Activated naive CD8-positive, alpha-beta T cell treated with anti-CD3 and anti-CD28 coated beads, Interleukin-2, amount 10 ng/mL, durations not matched to agents 7 days and 5 days (primary cell): ENCODE measurements at regions of chr16 and their contacts with region 1.

Region 1: DNA sequence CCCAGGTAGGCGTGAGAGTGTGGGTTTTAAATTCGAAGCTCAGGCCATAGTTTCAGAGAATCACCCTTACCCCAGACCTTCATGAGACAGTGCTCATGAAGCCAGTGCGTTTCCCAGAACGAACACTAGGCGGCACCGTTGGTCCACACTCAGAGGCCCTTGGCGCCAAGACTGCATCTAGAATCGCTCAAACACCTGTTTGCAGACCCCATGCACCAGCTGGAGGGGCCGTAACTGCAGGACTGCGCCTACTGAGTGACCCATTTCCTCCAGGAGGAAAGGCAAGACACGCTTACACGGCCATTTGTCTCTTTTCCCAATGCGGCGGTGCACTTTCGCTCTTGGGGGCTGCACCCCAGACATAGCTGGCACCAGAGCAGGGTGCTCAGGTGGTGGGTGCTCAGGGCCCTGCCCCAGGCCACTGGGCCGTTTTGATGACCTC is 34.0 kb downstream of the ADGRG5 start:
- DNase-seq: peak; percentile 89
- ATAC-seq: peak; percentile 55
- H3K4me3 Mint-ChIP-seq: no peak overlapping the region
- H3K27ac Mint-ChIP-seq: peak overlapping the region; percentile 96
- H3K4me1 Mint-ChIP-seq: peaks cover 48% of the 10 kb centered on the region
- H3K27me3 Mint-ChIP-seq: no peaks in the 10 kb centered on the region

Region 2: DNA sequence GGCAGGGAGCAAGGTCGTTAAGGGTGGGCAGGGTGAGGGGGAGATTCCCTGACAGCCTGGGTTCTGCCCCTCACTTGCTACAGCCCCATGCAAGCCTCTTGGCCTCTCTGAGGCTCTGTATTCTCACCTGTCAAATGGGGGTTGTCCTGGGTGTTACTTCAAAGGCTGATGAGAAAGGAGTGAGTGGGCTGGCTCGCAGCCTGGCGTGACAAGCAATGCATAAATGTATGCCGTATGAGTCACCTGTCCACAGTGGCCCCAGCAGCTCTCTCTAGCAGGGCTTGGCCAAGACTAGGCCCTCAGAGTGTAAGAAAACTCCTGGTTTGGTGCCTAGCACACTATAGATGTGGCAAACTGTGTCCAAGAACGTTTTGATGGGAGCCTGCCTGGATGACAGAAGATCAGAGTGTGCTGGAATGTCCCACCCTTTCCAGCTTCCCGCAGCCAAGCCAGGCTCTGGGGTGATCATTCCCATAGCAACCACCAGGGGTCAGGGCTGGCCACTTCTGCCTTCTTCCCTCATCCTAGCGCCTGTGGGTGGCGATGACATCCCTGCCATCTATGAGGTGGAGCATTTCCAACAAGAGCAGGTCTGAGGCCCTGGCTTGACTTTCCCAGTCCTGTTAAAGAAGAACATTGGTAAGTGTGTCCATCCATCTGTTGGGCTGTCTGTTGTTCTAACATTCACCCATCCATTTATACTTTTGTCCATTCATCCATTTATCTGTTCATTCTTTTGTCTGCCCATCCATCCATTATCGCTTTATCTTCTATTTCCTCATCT is 14.8 kb after region 1 on chr16:
- POLR2A ChIA-PET with region 1: interaction called, 52 read pairs
- DNase-seq: peak; percentile 78
- ATAC-seq: peak; percentile 73
- H3K4me3 Mint-ChIP-seq: peak overlapping the region; percentile 77
- H3K27ac Mint-ChIP-seq: peak overlapping the region; percentile 93
- H3K4me1 Mint-ChIP-seq: peaks cover 53% of the 10 kb centered on the region
- H3K27me3 Mint-ChIP-seq: no peaks in the 10 kb centered on the region

Region 3: GRCh38 chr16:57609541-57610401 is 33.3 kb after region 1 on chr16:
- POLR2A ChIA-PET with region 1: interaction called, 17 read pairs
- DNase-seq: peak; percentile 66
- ATAC-seq: peak; percentile 93
- H3K4me3 Mint-ChIP-seq: peak overlapping the region; percentile 67
- H3K27ac Mint-ChIP-seq: peak overlapping the region; percentile 93
- H3K4me1 Mint-ChIP-seq: peaks cover 51% of the 10 kb centered on the region
- H3K27me3 Mint-ChIP-seq: no peaks in the 10 kb centered on the region

Region 4: DNA sequence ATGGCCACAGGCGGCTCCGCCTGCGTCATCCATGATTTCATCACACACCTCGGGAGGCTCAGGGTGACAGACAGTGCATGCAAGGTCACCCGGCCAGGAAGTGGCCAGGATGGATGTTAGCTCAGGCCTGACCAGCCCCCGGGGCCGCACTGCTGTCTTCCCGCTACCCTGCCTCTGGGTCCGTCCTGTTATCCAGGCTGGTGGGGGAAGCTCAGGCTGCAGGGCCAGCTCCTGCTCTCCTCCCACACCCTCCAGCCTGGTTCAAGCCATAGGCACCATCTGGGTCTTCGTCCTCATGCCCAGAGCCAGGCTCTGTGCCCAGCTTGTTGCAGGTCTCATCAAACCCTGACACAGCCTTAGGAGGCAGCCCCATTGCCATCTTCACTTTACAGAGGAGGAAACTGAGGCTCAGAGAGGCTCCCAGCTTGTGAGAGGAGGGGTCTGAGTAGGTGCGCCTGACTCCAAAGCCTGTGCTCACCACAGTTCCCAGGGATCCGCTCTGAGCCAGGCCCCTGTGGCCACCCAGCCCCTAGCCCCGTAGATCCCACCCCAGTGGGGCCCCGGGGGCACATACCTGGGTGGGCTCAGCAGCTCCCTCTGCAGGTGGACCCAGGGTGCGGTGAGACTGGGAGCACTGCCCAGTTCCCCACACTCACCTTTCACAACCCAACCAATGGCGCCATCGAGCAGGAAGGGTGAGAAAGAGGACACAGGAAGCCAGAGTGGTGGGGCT is 91.2 kb after region 1 on chr16:
- POLR2A ChIA-PET with region 1: no interaction called
- DNase-seq: no peak
- ATAC-seq: no peak
- H3K4me3 Mint-ChIP-seq: no peak overlapping the region
- H3K27ac Mint-ChIP-seq: no peak overlapping the region
- H3K4me1 Mint-ChIP-seq: peaks cover 5% of the 10 kb centered on the region
- H3K27me3 Mint-ChIP-seq: peaks cover 7% of the 10 kb centered on the region

Region 5: GRCh38 chr16:57734925-57735754 is 158.7 kb after region 1 on chr16:
- POLR2A ChIA-PET with region 1: interaction called, 10 read pairs
- DNase-seq: peak; percentile 96
- ATAC-seq: peak; percentile 88
- H3K4me3 Mint-ChIP-seq: peak overlapping the region; percentile 99
- H3K27ac Mint-ChIP-seq: peak overlapping the region; percentile 96
- H3K4me1 Mint-ChIP-seq: peaks cover 19% of the 10 kb centered on the region
- H3K27me3 Mint-ChIP-seq: no peaks in the 10 kb centered on the region